ENCODE measurements at regions of chr2 and their contacts with region 1.

Region 1: DNA sequence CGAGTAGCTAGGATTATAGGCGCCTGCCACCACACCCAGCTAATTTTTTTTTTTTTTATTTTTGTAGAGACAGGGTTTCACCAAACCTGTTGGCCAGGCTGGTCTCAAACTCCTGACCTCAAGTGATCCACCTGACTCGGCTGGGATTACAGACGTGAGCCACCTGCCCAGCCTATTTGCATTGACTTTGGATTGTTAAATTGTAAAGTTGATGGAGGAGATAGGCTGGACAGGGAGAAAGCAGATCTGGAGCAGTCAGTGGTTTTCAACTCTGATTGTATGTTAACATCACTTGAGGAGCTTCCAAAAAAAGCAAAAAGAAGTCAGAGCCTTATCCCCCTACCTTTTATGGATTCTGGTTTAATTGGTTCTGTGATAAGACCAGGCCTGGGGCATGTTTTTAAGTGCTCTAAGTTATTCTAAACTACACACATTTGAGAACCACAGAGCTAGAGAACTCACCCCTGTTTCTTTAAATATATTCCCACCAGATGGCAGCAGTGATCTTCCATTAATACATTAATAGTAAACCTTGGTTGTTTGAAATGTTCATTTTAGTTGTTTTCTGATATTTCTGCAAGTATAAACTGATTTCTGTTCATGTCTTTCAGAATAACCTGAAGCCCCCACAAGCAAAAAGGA is 7.5 kb downstream of the C2orf49 start:
- DNase-seq: peak; percentile 58
- H3K4me3 Mint-ChIP-seq: no peak overlapping the region
- H3K27ac Mint-ChIP-seq: no peak overlapping the region
- H3K4me1 Mint-ChIP-seq: peaks cover 6% of the 10 kb centered on the region
- H3K27me3 Mint-ChIP-seq: no peaks in the 10 kb centered on the region
- CTCF ChIP-seq: peak; percentile 44

Region 2: DNA sequence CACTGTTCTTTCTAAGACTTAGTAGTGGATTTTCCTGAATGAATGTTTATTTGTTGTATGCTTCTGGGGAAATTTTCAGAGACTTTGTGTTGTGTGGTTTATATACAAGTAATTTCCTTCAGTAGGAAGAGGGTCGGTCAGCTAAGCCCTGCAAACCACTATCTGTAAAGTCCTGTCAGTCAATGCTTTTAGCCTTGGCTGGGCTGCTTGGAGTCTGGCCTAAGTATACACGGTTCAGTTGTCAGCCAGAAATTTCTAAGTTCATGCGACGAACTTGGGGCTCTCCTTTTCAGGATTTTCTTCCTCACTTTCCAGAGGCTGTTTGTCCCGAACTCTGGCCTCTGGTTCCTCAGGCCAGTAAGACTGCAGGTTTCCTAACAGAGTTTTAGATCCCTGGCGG is 13.8 kb after region 1 on chr2:
- CTCF ChIA-PET with region 1: interaction called, 19 read pairs
- POLR2A ChIA-PET with region 1: interaction called, 5 read pairs
- intact Hi-C with region 1: no loop called
- DNase-seq: no peak
- H3K4me3 Mint-ChIP-seq: no peak overlapping the region
- H3K27ac Mint-ChIP-seq: no peak overlapping the region
- H3K4me1 Mint-ChIP-seq: peaks cover 5% of the 10 kb centered on the region
- H3K27me3 Mint-ChIP-seq: no peaks in the 10 kb centered on the region
- CTCF ChIP-seq: no peak

Region 3: DNA sequence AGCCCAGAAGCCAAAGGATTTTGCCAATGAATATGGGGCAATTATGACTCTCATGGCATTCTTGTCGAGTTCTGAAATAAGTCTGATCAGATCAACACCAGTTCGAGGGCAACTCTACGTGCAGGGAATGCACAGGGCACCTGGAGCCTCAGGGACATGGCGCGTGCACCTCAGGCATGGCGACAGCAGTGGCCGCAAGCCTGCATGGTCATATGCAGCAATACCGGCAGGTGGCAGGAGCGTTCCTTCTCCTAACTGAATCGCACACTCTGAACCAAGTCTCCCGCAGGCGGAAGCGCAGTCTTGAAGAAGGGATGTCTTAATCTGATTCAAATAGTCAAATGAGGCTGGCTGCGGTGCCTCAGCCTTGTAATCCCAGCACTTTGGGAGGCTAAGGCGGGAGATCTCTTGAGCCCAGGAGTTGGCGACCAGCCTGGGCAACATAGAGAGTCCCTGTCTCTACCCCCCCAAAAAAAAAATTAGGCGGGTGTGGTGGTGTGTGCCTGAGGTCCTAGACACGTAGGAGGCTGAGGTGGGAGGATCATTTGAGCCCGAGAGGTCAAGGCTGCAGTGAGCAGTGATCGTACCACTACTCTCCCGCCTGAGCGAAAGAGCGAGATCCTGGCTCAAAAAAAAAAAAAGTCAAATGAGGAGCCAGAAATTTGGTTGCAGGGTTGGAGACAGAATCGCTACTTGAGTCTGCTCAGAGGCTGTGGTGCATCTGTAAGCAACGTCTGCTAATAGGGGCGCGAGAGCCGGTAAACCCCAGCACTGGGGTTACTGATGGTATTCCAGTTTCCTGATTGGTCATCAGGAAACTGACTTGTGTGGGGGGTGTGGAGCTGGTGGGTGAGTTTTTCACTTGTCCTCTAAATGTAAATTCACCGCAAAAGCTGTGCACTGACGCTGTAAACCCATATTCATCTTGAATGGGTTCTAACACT is 25.2 kb after region 1 on chr2:
- CTCF ChIA-PET with region 1: interaction called, 12 read pairs
- POLR2A ChIA-PET with region 1: no interaction called
- intact Hi-C with region 1: no loop called
- DNase-seq: peak; percentile 60
- H3K4me3 Mint-ChIP-seq: no peak overlapping the region
- H3K27ac Mint-ChIP-seq: no peak overlapping the region
- H3K4me1 Mint-ChIP-seq: no peaks in the 10 kb centered on the region
- H3K27me3 Mint-ChIP-seq: no peaks in the 10 kb centered on the region
- CTCF ChIP-seq: peak; percentile 51

Region 4: GRCh38 chr2:105438104-105438929 is 93.5 kb after region 1 on chr2:
- CTCF ChIA-PET with region 1: no interaction called
- POLR2A ChIA-PET with region 1: no interaction called
- intact Hi-C with region 1: no loop called
- DNase-seq: no peak
- H3K4me3 Mint-ChIP-seq: no peak overlapping the region
- H3K27ac Mint-ChIP-seq: no peak overlapping the region
- H3K4me1 Mint-ChIP-seq: peaks cover 5% of the 10 kb centered on the region
- H3K27me3 Mint-ChIP-seq: no peaks in the 10 kb centered on the region
- CTCF ChIP-seq: no peak

Region 5: DNA sequence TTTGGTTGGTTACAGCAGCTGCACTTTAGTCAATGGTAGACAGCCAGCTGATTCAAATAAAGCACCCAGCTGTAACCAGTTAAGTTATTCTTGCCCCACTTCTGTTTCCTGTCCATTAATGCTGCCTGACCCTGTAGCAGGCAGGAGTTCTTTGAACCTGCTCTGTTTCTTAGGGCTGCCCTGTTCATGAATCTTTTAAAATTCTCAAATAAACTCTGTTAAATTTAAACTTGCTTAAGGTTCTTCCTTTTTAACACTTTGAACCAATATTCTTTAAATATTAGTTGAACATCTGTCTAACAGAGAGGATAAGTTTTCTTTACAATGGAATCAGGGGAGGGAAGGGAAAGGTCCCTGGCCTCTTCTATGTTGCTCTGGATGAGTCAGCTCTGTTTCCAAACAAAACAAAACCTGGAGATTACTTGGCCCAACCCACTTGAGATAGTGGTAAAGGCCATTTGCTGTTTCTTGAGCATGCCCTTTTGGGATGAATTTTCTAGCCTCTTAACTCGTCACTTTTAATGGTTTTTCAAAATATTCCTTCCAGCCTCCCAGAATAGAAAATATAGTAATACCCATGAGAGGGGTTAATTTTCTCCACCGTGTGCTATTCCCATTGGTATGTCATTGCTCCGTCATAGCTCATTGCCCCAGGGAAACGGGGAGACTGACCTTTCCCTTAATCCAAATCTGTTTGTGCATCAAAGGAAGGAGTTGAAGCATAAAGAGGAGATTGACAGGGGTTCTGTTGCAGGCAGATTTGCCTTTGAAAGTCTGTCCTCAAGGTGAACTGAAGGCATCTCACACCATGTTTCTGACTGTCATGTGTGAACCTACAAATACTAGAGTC is 166.2 kb after region 1 on chr2:
- CTCF ChIA-PET with region 1: interaction called, 12 read pairs
- POLR2A ChIA-PET with region 1: no interaction called
- intact Hi-C with region 1: no loop called
- DNase-seq: peak; percentile 72
- H3K4me3 Mint-ChIP-seq: no peak overlapping the region
- H3K27ac Mint-ChIP-seq: no peak overlapping the region
- H3K4me1 Mint-ChIP-seq: peaks cover 15% of the 10 kb centered on the region
- H3K27me3 Mint-ChIP-seq: no peaks in the 10 kb centered on the region
- CTCF ChIP-seq: no peak

Region 6: DNA sequence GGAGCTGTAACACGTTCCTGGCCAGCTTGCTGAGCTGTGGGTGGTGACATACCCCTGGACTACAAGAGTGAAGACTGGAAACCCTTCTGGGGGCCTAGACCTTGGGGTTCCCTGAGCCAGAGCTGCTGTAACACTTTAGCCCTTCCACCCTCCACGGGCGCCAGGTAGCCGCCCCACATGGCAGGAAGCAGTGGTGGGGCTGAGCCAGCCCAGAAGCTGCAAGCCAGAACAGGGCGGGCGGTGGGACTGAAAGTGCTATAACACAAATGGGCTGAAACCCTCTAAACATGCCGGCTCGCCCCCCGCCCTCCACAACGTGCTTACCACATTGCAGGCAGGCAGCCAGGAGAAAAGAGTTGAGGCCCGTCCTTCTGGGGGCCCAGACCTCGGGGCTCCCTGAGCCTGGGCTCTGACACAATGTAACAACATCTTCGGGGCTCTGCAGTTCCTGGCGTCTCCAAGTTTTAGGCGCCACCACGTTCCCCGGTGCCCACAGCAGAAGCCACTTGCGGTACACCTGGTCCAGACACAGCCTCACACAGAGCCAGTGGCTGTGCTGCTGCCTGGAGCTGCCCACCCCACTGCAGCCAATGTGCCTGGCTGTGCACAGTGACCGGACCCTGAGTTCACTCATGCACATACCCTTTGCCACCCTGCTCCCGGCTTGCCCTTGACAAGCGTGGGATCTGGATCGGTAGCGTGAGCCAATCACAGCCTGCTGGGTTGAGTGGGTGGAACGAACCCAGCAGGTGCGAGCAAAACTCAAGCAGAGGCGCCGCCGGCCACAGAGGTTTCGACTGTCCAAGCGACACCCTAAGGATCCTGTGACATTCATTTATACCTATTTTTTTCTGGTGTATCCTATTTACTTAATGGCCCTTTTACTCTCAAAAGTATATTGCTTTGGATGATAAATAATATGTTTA is 181.4 kb after region 1 on chr2:
- CTCF ChIA-PET with region 1: interaction called, 81 read pairs
- POLR2A ChIA-PET with region 1: interaction called, 3 read pairs
- intact Hi-C with region 1: loop called (anchors 1 kb)
- DNase-seq: no peak
- H3K4me3 Mint-ChIP-seq: no peak overlapping the region
- H3K27ac Mint-ChIP-seq: no peak overlapping the region
- H3K4me1 Mint-ChIP-seq: no peaks in the 10 kb centered on the region
- H3K27me3 Mint-ChIP-seq: no peaks in the 10 kb centered on the region
- CTCF ChIP-seq: no peak

Region 7: GRCh38 chr2:106175086-106175850 is 830.4 kb after region 1 on chr2:
- CTCF ChIA-PET with region 1: no interaction called
- POLR2A ChIA-PET with region 1: no interaction called
- intact Hi-C with region 1: no loop called
- DNase-seq: no peak
- H3K4me3 Mint-ChIP-seq: no peak overlapping the region
- H3K27ac Mint-ChIP-seq: no peak overlapping the region
- H3K4me1 Mint-ChIP-seq: no peaks in the 10 kb centered on the region
- H3K27me3 Mint-ChIP-seq: no peaks in the 10 kb centered on the region
- CTCF ChIP-seq: no peak